ENCODE measurements at regions of chr5 and their contacts with region 1.

Region 1: DNA sequence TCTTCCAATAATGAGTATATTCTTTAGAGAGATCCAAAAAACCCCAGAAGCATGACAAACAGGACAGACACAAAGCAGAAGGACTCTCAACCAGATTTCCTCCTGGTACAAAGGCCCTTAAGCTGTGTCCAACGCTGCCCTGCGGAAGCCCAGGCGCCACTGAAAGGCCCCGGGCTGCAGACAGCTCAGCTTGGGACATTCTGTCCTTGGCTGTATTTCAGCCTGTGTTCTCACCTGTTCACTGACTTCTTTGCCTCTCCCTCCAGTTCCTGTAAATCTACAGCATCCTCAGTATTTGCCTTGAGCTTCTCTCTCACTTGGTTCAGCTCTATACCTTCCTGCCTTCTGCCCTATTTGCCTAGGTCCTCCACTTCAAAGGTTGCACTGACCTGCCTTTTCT is 96.5 kb downstream of the SH3TC2 start:
- DNase-seq: no peak

Region 2: DNA sequence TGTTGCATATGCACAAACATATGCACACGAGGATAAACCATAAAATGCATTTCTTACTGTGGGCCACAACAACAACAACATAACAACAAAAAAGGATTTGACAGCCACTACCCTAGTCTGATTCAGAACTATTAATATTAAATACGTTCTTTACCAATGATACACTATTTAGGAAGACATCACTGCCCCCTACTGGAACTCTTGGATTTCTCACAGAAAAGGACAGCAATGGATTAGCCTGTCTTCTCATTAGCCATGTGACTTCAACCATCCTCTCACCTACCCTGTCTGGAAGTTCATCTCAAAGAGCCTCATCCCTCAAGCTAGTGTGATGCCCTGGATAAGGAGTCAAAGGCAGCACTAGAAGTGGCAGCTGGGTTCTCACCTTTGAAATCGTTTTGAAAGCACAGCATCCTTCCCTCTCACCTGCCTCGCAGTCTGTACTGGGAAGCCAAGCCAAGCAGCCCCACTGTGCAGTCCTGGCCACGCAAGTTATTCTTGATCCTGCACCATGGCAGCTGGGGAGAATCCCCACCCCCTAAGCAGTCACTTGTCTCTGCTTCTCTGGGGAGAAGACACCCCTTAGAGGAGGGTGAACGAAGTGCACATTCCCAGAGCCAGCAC is 31.9 kb after region 1 on chr5:
- intact Hi-C with region 1: loop called (anchors 5 kb)
- DNase-seq: no peak